Activated CD8-positive, alpha-beta T cell treated with anti-CD3 and anti-CD28 coated beads, Interleukin-2, amount 10 ng/mL, durations not matched to agents 7 days and 5 days (primary cell): ENCODE measurements at regions of chr1 and their contacts with region 1.

Region 1: DNA sequence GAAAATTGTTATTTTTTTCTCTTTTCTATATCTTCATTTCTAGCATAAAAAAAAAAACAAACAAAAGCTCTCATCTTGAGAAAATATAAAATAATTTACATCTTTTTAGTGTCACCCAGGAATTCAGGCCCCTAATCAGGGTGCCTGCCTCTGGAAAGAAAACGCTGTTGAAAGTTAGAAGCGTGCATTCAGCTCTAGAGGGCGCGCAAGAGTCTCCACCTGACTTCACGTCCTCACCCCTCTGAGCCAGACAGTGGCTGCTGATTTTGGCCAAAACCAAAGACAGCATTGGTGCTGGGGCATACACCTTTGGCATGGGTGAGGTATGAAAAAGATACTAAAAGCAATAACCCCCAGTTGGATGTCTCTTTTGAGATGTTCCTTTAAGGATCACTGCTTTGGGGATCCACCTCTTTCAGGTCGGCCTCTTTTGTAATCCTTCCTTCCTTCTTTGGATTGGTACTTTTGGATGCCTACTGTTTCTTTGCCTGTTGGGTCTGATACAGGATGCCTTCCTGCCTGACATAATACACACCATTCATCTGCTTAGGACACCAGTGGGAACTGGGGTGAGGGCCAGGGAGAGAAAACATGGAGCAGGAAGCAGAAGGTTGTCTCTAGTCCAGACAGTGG is 77.6 kb upstream of the CHRM3 start:
- DNase-seq: peak; percentile 44
- ATAC-seq: peak; percentile 65
- H3K4me3 Mint-ChIP-seq: no peak overlapping the region
- H3K27ac Mint-ChIP-seq: no peak overlapping the region
- H3K4me1 Mint-ChIP-seq: no peaks in the 10 kb centered on the region
- H3K27me3 Mint-ChIP-seq: no peaks in the 10 kb centered on the region

Region 2: GRCh38 chr1:239322369-239322768 is 13.6 kb after region 1 on chr1:
- CTCF ChIA-PET with region 1: no interaction called
- POLR2A ChIA-PET with region 1: no interaction called
- DNase-seq: no peak
- ATAC-seq: no peak
- H3K4me3 Mint-ChIP-seq: no peak overlapping the region
- H3K27ac Mint-ChIP-seq: no peak overlapping the region
- H3K4me1 Mint-ChIP-seq: no peaks in the 10 kb centered on the region
- H3K27me3 Mint-ChIP-seq: no peaks in the 10 kb centered on the region

Region 3: GRCh38 chr1:239386453-239387303 is 77.9 kb after region 1 on chr1 and contains the start of gene CHRM3:
- CTCF ChIA-PET with region 1: no interaction called
- POLR2A ChIA-PET with region 1: no interaction called
- DNase-seq: peak; percentile 30
- ATAC-seq: peak; percentile 59
- H3K4me3 Mint-ChIP-seq: peak within 1 kb of the TSS; percentile 62
- H3K27ac Mint-ChIP-seq: no peak within 1 kb of the TSS
- H3K4me1 Mint-ChIP-seq: peaks cover 20% of the 10 kb centered on the region
- H3K27me3 Mint-ChIP-seq: peaks cover 61% of the 10 kb centered on the region
- total RNA-seq, gene CHRM3: not detected

Region 4: DNA sequence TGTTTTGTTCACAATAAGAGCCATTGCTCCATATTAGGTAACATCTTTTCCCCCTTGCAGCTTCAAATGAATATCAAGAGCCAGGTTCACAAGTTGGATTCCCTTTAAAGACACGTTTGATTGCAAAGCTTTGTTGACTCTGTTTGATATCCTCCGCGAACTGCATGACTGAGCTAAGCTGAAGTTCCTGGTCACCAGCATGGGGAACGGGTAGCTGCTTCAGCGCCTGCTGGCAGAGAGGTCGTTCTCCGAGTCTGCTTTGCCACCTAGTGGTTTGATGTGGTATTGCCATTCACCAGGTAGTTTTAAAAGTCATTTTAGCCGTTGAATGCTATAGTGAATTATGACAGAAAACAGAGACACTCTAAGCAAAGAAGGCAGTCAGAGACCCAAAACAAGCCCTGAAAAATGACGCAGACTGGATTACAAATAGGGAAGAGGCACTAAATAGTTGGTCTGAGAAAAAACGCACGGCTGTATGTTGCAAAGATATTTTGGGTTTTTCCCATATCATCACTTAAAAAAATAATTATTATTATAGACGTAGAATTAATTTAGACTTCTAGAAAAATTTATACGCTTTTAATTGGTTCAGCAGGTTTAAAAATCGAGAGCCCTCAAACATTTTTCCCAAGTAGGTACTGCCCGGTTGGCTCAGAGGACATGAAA is 589.4 kb after region 1 on chr1:
- CTCF ChIA-PET with region 1: interaction called, 10 read pairs
- POLR2A ChIA-PET with region 1: no interaction called
- DNase-seq: peak; percentile 84
- ATAC-seq: peak; percentile 98
- H3K4me3 Mint-ChIP-seq: no peak overlapping the region
- H3K27ac Mint-ChIP-seq: no peak overlapping the region
- H3K4me1 Mint-ChIP-seq: peaks cover 3% of the 10 kb centered on the region
- H3K27me3 Mint-ChIP-seq: peaks cover 3% of the 10 kb centered on the region